Heart left ventricle (tissue), 16 donors: ENCODE measurements at regions of chr2 and their contacts with region 1.

Region 1: GRCh38 chr2:163657281-163657656 is 78.5 kb downstream of the FIGN start:
- DNase-seq: no peak
- ATAC-seq: no peak
- H3K4me3 ChIP-seq: no peak overlapping the region
- H3K27ac ChIP-seq: peak overlapping the region in 8 of 12 donors; percentile 34 to 74 (median 64)
- H3K4me1 ChIP-seq: peaks cover 0 to 45% (median 9%) of the 10 kb centered on the region in 12 donors
- H3K27me3 ChIP-seq: no peaks in the 10 kb centered on the region
- CTCF ChIP-seq: no peak
- POLR2A ChIP-seq: no peak

Region 2: DNA sequence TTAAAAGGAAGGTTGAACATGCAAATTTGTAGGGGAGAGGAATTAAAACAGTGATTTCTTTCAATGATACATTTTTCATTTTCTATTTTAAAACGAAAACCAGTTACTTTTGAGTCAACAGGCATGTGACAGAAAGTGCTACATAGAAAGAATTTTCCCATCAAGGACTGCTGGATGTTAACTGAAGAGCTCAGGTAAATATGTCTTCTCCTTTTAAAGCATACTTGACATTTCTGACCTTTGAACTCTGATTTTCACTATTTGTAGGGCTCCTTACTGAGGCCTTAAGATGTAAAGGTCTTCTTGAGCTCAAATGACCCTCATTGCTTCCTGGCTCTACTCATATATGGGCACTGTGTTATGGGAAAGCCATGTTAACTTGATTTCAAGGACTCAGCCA is 46.1 kb after region 1 on chr2:
- intact Hi-C with region 1: loop called in 1 of 10 experiments (anchors 5 kb)
- DNase-seq: no peak
- ATAC-seq: no peak
- H3K4me3 ChIP-seq: no peak overlapping the region
- H3K27ac ChIP-seq: no peak overlapping the region
- H3K4me1 ChIP-seq: peaks cover 0 to 47% (median 26%) of the 10 kb centered on the region in 12 donors
- H3K27me3 ChIP-seq: no peaks in the 10 kb centered on the region
- CTCF ChIP-seq: no peak
- POLR2A ChIP-seq: no peak

Region 3: DNA sequence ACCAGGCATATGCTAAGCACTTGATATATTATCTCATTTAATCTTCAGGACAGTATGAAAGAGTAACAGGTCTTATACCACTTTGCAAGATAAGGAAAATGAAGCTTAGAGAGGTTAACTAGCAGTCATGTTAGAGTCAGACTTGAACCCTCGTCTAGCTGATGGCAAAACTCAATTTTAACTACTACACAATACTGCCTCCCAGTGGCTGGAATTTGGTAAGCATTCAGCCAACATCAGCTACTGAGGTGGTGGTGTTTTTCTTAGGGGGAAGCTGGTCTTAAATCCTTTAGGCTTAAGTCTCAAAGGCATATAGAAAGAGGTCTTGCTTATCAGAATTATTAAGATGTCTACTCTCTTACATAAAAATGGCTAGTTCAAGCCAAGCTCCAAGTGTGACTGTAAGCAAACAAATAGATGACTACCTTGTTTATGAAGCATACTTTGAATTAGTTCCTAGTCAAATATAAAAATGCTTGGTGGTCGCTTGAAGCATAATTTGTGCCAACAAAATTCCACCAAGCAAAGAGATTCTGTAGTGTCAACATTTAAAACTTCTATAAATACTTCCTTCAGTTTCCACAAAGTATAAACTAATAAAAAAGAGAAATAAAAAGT is 404.0 kb after region 1 on chr2:
- intact Hi-C with region 1: no loop called
- DNase-seq: peak in 1 of 5 donors; percentile 28
- ATAC-seq: peak in 1 of 4 donors; percentile 49
- H3K4me3 ChIP-seq: no peak overlapping the region
- H3K27ac ChIP-seq: no peak overlapping the region
- H3K4me1 ChIP-seq: no peaks in the 10 kb centered on the region
- H3K27me3 ChIP-seq: no peaks in the 10 kb centered on the region
- CTCF ChIP-seq: peak; percentile 36 to 70 (median 58)
- POLR2A ChIP-seq: no peak

Region 4: DNA sequence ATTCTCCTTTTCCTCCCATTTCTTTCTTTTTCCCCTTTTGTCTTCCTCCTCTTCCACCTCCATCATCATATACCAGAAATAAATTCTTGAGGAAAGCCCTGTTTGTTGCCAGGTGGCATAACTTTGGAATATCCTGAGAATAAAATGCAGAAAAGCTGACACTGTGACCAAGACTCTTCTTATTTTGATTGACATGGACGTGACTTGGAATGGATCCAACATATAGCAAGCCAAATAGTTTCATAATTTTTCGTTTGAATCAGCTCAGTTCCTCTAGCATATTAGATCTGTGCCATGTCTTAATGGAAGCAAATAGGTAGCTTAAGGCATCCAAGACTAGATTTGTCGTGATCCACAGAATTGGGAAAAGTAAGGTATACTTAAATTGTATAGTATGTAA is 433.3 kb after region 1 on chr2:
- intact Hi-C with region 1: no loop called
- DNase-seq: no peak
- ATAC-seq: no peak
- H3K4me3 ChIP-seq: no peak overlapping the region
- H3K27ac ChIP-seq: no peak overlapping the region
- H3K4me1 ChIP-seq: no peaks in the 10 kb centered on the region
- H3K27me3 ChIP-seq: no peaks in the 10 kb centered on the region
- CTCF ChIP-seq: no peak
- POLR2A ChIP-seq: no peak